PC-3 (cell line): ENCODE measurements at regions of chr9 and their contacts with region 1.

Region 1: GRCh38 chr9:94554439-94555391 is at the start of gene PCAT7:
- DNase-seq: peak; percentile 87
- ATAC-seq: peak; percentile 85
- H3K4me3 ChIP-seq: peak within 1 kb of the TSS; percentile 85
- H3K27ac ChIP-seq: peak within 1 kb of the TSS; percentile 82
- H3K4me1 ChIP-seq: peaks cover 16% of the 10 kb centered on the region; the same call in 1 of the 2 replicates
- H3K27me3 ChIP-seq: no peaks in the 10 kb centered on the region
- CTCF ChIP-seq: peak; percentile 69
- total RNA-seq, gene PCAT7: 1.9 and 2.5 TPM in 2 replicates

Region 2: GRCh38 chr9:94449486-94449885 is 105.2 kb before region 1 on chr9:
- CTCF ChIA-PET with region 1: interaction called, 14 read pairs
- POLR2A ChIA-PET with region 1: no interaction called
- intact Hi-C with region 1: no loop called
- DNase-seq: no peak
- ATAC-seq: no peak
- H3K4me3 ChIP-seq: no peak overlapping the region
- H3K27ac ChIP-seq: no peak overlapping the region
- H3K4me1 ChIP-seq: no peaks in the 10 kb centered on the region
- H3K27me3 ChIP-seq: no peaks in the 10 kb centered on the region
- CTCF ChIP-seq: no peak

Region 3: DNA sequence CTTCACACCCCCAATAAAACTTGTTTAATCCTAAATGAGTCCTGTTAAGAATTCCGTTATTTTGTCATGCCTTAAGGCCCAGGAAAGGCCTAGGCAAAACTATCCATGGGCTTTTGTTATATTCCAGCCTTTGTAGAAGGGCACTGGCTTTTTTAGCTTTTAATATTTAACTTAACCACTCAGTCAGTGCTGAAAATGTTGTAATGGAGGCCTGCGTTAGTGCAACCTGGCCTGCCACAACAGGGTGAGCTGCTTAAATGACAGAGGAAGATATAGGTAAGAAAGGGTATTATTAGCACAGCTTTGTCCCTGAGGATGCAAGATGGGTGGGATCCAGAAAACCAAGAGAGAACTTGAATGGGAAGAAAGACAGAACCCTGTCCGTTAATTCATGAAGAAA is 40.0 kb before region 1 on chr9:
- CTCF ChIA-PET with region 1: no interaction called
- POLR2A ChIA-PET with region 1: no interaction called
- intact Hi-C with region 1: no loop called
- DNase-seq: no peak
- ATAC-seq: no peak
- H3K4me3 ChIP-seq: no peak overlapping the region
- H3K27ac ChIP-seq: no peak overlapping the region
- H3K4me1 ChIP-seq: peaks cover 10% of the 10 kb centered on the region; the same call in 1 of the 2 replicates
- H3K27me3 ChIP-seq: no peaks in the 10 kb centered on the region
- CTCF ChIP-seq: no peak

Region 4: DNA sequence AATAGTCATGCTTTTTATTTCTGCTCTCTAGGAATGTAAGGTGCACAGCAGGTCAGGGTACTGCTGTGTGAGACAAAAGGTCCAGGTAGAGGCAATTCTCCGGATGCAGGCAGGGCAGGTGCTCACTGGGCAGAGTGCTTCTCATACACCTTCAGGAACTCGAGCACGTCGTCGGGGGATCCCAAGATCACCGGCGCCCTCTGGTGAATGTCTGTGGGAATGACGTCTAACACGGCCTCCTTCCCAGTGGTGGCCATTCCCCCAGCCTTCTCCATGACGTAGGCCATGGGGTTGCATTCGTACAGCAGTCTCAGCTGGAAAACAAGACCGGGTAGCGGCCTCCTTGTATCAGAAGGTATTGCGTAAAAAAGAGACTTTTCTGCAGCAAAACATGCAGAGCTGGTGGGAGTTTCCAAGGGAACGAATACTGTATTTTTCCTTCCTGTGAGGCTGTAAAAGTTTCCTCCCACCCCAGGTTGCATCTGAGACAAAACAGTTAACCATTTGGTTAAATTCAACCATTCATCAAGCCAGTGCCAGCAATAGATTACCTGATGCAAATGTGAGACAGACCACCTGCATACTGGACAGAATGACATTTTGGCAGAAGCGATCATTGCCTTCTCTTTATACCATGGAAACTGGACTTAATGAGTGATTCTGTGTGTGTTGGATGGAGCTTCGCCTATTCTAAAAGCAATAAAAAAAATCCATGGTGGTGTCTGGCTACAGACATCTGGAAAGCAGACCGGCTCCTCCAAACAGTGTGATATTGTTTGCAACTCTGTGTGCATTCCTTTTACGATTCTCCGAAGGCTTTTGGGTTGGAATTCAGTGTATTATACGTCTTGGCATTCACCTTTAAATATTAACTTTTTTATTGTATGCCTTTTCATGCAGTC is 48.8 kb after region 1 on chr9:
- CTCF ChIA-PET with region 1: no interaction called
- POLR2A ChIA-PET with region 1: no interaction called
- intact Hi-C with region 1: loop called (anchors 2 kb)
- DNase-seq: peak; percentile 10
- ATAC-seq: peak; percentile 45; the same call in 1 of the 2 replicates
- H3K4me3 ChIP-seq: no peak overlapping the region
- H3K27ac ChIP-seq: no peak overlapping the region
- H3K4me1 ChIP-seq: no peaks in the 10 kb centered on the region
- H3K27me3 ChIP-seq: no peaks in the 10 kb centered on the region
- CTCF ChIP-seq: peak; percentile 56

Region 5: DNA sequence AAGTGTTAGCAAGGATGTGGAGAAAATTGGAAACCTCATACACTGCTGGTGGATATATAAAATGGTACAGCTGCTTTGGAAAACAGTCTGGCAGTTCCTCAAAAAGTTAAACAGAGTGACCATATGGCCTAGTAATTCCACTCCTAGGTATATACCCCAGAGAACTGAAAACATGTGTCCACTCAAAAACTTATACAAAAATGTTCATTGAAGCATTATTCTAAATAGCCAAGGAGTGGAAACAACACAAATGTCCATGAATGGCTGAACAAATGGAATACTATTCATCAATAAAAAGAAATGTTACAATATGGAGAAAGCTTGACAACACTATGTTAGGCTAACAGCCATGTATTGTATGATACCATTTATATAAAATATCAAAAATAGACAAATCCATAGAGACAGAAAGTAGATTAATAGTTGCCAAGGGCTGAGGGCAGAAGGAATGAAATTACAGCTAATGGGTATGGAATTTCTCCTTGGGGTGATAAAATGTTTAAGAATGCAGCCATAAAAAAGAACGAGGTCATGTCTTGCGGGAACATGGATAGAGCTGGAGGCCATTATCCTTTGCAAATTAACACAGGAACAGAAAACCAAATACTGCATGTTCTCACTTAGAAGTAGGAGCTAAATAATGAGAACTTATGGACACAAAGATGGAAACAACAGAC is 118.2 kb after region 1 on chr9:
- CTCF ChIA-PET with region 1: interaction called, 3 read pairs
- POLR2A ChIA-PET with region 1: no interaction called
- intact Hi-C with region 1: loop called (anchors 1 kb)
- DNase-seq: peak; percentile 79
- ATAC-seq: peak; percentile 72
- H3K4me3 ChIP-seq: no peak overlapping the region
- H3K27ac ChIP-seq: peak overlapping the region; percentile 53
- H3K4me1 ChIP-seq: peaks cover 17% of the 10 kb centered on the region
- H3K27me3 ChIP-seq: no peaks in the 10 kb centered on the region
- CTCF ChIP-seq: no peak

Region 6: DNA sequence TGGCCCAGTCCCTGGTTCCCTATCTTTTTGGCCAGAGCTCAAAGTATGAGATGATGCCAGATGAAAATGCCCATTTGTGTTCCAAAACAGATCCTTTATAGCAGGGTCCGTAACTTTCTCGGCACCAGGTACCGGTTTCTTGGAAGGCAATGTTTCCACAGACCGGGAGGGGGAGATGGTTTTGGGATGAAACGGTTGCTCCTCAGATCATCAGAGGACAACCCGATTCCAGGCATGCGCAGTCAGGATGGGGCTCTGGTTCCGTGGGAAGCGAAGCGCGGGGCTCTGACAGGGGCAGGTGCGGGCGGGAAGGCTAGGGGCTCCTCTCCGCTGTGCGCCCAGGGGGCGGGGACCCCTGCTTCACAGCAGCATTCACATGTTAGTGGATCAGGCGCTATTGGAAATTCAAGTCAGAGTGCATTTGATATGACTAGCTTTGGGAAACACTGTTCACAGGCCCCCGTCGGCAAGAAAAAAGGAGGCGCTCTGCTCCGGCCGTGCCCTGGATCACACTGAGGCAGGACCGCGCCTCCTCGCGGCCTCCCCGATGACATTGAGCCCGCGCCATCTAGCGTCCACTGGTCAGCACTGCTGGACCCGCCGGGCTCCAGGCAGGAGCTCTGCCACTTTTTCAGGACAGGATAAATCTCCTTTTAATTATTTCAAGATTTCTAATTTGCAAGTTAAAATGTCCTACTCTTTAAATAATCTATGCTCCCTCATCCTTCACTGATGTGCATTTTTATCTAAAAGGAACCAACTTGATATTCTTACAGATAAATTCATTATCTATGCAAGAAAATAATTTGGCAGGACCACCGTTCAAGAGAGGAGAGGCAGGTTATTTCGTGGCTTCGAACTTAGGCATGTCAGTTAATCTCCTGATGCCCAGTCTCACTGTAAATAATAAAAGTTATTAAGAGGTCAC is 572.8 kb after region 1 on chr9:
- CTCF ChIA-PET with region 1: no interaction called
- POLR2A ChIA-PET with region 1: no interaction called
- intact Hi-C with region 1: loop called (anchors 2 kb)
- DNase-seq: peak; percentile 74
- ATAC-seq: peak; percentile 91
- H3K4me3 ChIP-seq: 0 out of 2 replicates have a peak overlapping the region, but pooled peaks have one; percentile 22
- H3K27ac ChIP-seq: no peak overlapping the region
- H3K4me1 ChIP-seq: no peaks in the 10 kb centered on the region
- H3K27me3 ChIP-seq: no peaks in the 10 kb centered on the region
- CTCF ChIP-seq: peak; percentile 92